Activated CD4-positive, alpha-beta T cell treated with anti-CD3 and anti-CD28 coated beads for 36 hours (primary cell): ENCODE measurements at regions of chr19 and their contacts with region 1.

Region 1: DNA sequence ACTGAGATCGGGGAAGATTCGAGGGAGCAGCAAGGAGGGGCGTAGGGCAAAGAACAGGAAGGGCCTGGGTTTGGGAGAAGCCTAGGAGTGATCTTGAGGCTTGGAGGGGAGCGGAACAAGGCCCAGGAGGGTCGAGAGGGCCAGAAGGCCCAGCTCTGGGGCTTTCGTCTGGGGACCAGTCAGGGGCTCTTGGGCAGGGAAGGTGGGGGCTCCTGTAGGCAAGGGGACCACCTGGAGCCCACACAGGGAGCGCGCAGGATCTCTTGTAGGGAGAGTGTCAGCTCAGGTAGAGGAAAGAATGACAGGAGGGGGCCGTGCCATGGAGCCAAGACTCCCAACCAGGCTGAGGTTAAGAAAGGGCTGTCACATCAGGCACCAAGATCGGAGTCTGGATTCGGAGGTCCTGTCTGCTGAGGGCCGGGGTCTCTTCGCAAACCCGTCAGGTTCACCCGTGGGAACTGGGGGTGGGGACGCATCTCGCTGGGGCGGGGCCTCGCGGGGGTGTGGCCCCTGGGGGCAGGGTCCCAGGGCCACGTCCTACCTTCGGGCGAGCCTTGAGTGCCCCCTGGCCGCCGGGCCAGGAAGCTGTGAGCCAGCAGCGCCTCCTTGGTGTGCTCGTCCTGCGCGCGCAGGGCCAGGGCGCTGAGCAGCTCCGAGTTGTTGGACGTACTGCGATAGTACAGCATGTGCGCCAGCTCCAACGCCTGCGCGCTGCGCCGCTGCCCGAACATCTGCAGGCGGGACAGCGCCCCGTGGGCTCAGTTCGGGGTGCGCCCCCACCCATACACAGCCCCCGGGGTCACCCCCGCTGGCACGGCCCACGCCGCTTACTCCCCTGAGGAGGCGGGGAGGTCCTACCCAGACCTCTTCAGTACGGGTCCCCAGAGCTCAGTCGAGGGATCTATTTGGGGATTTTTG is 8.4 kb downstream of the EMP3 start:
- DNase-seq: peak; percentile 97
- ATAC-seq: peak; percentile 72
- H3K4me3 Mint-ChIP-seq: peak overlapping the region; percentile 97
- H3K27ac Mint-ChIP-seq: peak overlapping the region; percentile 98
- H3K4me1 Mint-ChIP-seq: peaks cover 49% of the 10 kb centered on the region
- H3K27me3 Mint-ChIP-seq: no peaks in the 10 kb centered on the region

Region 2: DNA sequence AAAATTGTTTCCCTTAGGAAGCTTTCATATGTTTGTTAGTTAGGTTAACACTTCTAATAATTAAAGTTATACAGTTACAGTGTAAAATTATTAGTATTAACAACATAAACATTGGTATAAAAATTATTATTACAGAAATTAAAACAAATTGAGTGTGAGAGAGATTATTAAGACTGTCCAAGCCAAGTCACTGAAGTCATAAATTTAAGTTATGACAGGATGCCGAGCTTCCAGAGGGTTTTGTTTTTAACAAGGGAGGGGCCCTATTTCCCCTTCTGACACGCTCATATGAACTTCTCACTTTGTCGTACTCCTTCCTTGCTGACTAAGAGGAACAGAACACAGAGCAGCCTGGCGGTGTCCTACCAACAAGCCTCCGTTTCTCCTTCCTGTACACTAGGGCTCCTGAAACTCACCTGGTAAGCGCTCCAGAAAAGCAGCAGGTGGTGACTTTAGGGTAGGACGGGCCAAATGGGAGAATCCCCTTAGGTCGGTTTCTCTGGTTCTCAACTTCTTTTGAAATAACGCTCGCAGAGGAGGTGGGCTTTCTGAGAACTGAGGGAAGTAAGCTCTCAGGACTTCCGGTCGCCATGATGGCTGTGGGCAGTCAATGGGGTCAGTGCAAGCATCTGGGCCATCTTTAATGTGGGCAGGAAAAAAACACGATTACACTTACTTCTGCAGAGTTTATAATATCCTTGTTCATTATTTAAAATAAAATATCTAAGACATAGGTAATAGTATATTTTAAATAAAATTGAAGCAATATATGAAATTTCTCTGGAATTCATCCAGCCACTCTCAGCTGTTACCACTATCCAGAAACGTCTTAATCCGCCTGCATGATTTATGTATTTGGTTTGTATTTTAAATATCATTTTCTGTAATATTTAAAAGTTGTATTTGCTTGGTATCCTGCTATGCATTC is 78.1 kb before region 1 on chr19 and contains the start of gene CARD8:
- CTCF ChIA-PET with region 1: interaction called, 3 read pairs
- POLR2A ChIA-PET with region 1: no interaction called
- intact Hi-C with region 1: loop called in 1 of 2 experiments (anchors 5 kb)
- DNase-seq: peak; percentile 89
- ATAC-seq: peak; percentile 89
- H3K4me3 Mint-ChIP-seq: peak within 1 kb of the TSS; percentile 92
- H3K27ac Mint-ChIP-seq: peak within 1 kb of the TSS; percentile 98
- H3K4me1 Mint-ChIP-seq: peaks cover 63% of the 10 kb centered on the region
- H3K27me3 Mint-ChIP-seq: no peaks in the 10 kb centered on the region
- total RNA-seq, gene CARD8: 109 to 118 TPM

Region 3: DNA sequence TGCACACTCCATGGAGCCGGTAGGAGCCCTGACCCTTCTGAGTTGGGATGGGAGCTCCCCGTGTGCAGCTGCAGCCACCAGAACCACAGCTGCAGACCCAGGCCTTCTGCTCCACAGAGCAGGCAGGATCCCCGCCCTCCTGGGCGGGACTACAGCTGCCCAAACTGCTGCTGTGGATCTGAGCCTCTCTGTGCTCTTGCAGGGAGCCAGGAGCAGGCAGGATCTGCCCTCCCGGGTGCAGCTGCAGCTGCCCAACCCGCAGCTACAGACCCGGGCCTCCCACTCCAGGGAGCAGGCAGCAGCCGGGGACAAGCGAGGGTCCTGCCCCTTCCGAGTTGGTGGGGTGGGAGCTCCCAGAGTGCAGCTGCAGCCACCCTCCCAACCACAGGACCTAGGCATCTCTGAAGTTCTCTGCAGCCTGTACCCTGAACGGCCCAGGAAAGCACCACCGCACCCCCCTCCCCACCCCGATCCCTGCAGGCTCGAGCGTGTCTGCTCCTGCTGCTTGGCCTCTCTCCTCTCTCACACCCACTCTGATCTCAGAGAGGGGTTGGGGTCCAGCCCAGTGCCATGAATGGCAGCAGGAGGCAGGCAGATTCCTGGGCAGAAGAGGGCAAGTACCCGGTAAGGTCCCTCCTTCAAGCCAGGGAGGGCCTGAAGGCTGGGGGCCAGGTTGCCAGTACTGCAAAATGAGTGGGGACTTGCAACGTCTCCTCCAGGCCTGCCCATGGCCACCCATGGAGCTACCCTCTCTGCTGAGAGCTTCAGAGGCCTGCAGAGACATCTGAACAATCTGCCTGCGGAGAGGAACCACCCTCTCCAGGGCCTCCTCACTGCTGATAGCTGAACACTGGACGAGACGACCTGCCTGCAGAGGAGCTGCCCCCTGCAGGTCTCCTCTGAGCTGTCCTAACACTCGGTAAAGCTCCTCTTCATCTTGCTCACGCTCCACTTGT is 24.8 kb before region 1 on chr19:
- CTCF ChIA-PET with region 1: interaction called, 40 read pairs
- POLR2A ChIA-PET with region 1: interaction called, 3 read pairs
- intact Hi-C with region 1: no loop called
- DNase-seq: no peak
- ATAC-seq: no peak
- H3K4me3 Mint-ChIP-seq: no peak overlapping the region
- H3K27ac Mint-ChIP-seq: no peak overlapping the region
- H3K4me1 Mint-ChIP-seq: no peaks in the 10 kb centered on the region
- H3K27me3 Mint-ChIP-seq: no peaks in the 10 kb centered on the region

Region 4: DNA sequence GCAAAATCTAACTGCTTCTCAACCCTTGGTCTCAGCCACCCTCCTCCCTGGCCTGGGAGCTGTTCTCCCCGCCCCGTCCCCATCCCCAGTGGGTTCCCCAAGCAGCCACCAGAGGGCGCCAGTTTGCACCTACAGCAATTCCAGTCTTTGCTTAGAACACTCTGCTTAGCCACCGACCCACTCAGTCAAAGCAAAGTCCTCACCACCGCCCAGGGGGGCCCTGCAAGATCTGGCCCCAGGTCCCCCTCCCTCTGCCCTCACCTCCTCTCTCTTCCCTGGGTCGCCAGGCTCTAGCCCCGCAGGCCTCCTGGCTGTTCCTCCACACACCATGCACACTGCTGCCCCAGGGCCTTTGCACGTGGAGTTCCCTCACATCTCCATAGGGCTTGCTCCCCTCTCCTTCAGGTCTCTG is 17.6 kb after region 1 on chr19:
- CTCF ChIA-PET with region 1: interaction called, 13 read pairs
- POLR2A ChIA-PET with region 1: no interaction called
- intact Hi-C with region 1: loop called in 1 of 2 experiments (anchors 1 kb)
- DNase-seq: peak; percentile 92
- ATAC-seq: peak; percentile 99
- H3K4me3 Mint-ChIP-seq: no peak overlapping the region
- H3K27ac Mint-ChIP-seq: no peak overlapping the region
- H3K4me1 Mint-ChIP-seq: no peaks in the 10 kb centered on the region
- H3K27me3 Mint-ChIP-seq: no peaks in the 10 kb centered on the region

Region 5: GRCh38 chr19:48398375-48399235 is 64.9 kb after region 1 on chr19:
- CTCF ChIA-PET with region 1: interaction called, 4 read pairs
- POLR2A ChIA-PET with region 1: no interaction called
- intact Hi-C with region 1: loop called (anchors 2 to 5 kb)
- DNase-seq: peak; percentile 94
- ATAC-seq: peak; percentile 68
- H3K4me3 Mint-ChIP-seq: peak overlapping the region; percentile 83
- H3K27ac Mint-ChIP-seq: no peak overlapping the region
- H3K4me1 Mint-ChIP-seq: peaks cover 29% of the 10 kb centered on the region
- H3K27me3 Mint-ChIP-seq: peaks cover 31% of the 10 kb centered on the region

Region 6: GRCh38 chr19:48513289-48514122 is 179.8 kb after region 1 on chr19:
- CTCF ChIA-PET with region 1: no interaction called
- POLR2A ChIA-PET with region 1: no interaction called
- intact Hi-C with region 1: loop called in 1 of 2 experiments (anchors 2 kb)
- DNase-seq: peak; percentile 86
- ATAC-seq: peak; percentile 81
- H3K4me3 Mint-ChIP-seq: no peak overlapping the region
- H3K27ac Mint-ChIP-seq: peak overlapping the region; percentile 30
- H3K4me1 Mint-ChIP-seq: peaks cover 8% of the 10 kb centered on the region
- H3K27me3 Mint-ChIP-seq: no peaks in the 10 kb centered on the region